CD4-positive, alpha-beta T cell (primary cell): ENCODE measurements at regions of chr1 and their contacts with region 1.

Region 1: GRCh38 chr1:191327868-191328267 is 830.4 kb upstream of the RGS18 start:
- DNase-seq: no peak
- ATAC-seq: no peak
- H3K4me3 ChIP-seq: no peak overlapping the region
- H3K4me3 Mint-ChIP-seq: no peak overlapping the region
- H3K27ac ChIP-seq: no peak overlapping the region
- H3K27ac Mint-ChIP-seq: no peak overlapping the region
- H3K4me1 ChIP-seq: no peaks in the 10 kb centered on the region
- H3K4me1 Mint-ChIP-seq: no peaks in the 10 kb centered on the region
- H3K27me3 ChIP-seq: no peaks in the 10 kb centered on the region
- H3K27me3 Mint-ChIP-seq: no peaks in the 10 kb centered on the region
- CTCF ChIP-seq: no peak

Region 2: DNA sequence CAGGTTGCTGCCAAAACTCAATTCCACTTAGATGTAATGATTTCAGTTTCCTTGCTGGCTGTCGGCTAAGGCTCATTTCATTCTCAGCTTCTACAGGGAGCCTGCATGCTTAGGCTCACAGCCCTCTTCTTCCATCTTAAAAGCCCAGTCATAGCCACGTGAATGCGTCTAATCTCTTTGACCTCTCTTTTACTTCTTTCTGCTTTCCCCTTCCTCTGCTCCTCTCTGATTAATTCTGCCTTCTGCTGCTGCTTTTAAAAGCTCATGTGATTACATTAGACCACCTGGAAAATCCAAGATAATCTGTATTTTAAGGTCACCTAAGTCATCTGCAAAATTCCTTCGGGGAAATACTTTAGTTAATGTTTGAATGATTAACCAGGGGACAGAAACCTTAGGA is 37.4 kb before region 1 on chr1:
- CTCF ChIA-PET with region 1: no interaction called
- POLR2A ChIA-PET with region 1: no interaction called
- intact Hi-C with region 1: loop called in 1 of 2 experiments (anchors 1 kb)
- DNase-seq: no peak
- ATAC-seq: no peak
- H3K4me3 ChIP-seq: no peak overlapping the region
- H3K4me3 Mint-ChIP-seq: no peak overlapping the region
- H3K27ac ChIP-seq: no peak overlapping the region
- H3K27ac Mint-ChIP-seq: no peak overlapping the region
- H3K4me1 ChIP-seq: no peaks in the 10 kb centered on the region
- H3K4me1 Mint-ChIP-seq: no peaks in the 10 kb centered on the region
- H3K27me3 ChIP-seq: no peaks in the 10 kb centered on the region
- H3K27me3 Mint-ChIP-seq: no peaks in the 10 kb centered on the region
- CTCF ChIP-seq: no peak